ENCODE measurements at regions of chr6 and their contacts with region 1.

Region 1: DNA sequence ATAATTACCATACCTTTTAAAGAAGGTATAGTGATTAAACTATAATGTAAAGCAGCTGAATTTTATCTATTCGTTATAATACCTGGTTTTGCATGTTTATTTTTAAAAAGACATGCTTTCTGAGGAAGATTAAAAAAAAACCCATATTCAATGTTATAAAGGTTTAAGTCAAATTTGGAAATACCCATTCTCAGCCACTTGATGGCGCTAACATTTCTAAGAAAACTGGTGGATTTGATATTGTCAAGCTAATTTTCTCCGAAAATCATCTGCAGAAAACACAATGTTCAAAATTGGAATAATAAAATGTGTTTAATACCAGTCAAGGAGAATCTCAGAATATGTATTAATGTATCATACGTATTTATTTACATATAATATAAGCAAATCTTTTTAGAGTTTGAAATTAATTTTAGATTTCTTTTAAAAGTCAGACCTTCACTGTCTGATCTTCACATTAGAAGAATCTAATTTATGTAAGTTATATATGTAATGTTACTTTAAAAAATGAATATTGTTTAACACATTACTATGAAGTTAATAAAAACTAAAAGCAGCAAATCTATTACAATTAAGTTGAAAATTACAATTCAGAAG is 35.0 kb downstream of the SHPRH start:
- DNase-seq: no peak
- ATAC-seq: no peak
- H3K4me3 Mint-ChIP-seq: no peak overlapping the region
- H3K27ac Mint-ChIP-seq: no peak overlapping the region
- H3K4me1 Mint-ChIP-seq: no peaks in the 10 kb centered on the region
- H3K27me3 Mint-ChIP-seq: no peaks in the 10 kb centered on the region

Region 2: GRCh38 chr6:145225500-145225899 is 703.6 kb before region 1 on chr6:
- CTCF ChIA-PET with region 1: no interaction called
- POLR2A ChIA-PET with region 1: no interaction called
- intact Hi-C with region 1: no loop called
- DNase-seq: no peak
- ATAC-seq: no peak
- H3K4me3 Mint-ChIP-seq: no peak overlapping the region
- H3K27ac Mint-ChIP-seq: no peak overlapping the region
- H3K4me1 Mint-ChIP-seq: no peaks in the 10 kb centered on the region
- H3K27me3 Mint-ChIP-seq: peaks cover 5% of the 10 kb centered on the region

Region 3: DNA sequence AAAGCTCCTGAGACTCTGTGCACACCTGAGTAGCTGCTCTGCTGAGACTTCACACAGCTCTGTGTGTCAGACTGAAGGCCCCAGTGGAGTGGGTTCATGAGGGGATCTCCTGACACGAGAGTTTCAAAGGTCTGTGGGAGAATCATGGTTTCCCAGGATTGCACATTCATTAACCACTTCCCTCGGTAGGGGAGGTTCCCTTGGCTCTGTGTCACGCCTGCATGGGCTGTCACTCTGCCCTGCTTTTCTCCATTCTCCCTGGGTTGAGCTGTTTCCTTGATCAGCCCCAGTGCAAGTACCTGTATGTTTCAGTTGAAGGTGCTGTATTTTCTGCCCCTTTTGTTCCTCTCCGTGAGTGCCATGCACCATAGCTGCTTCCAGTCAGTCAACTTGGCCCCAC is 430.7 kb before region 1 on chr6:
- CTCF ChIA-PET with region 1: no interaction called
- POLR2A ChIA-PET with region 1: no interaction called
- intact Hi-C with region 1: no loop called
- DNase-seq: no peak
- ATAC-seq: no peak
- H3K4me3 Mint-ChIP-seq: no peak overlapping the region
- H3K27ac Mint-ChIP-seq: no peak overlapping the region
- H3K4me1 Mint-ChIP-seq: no peaks in the 10 kb centered on the region
- H3K27me3 Mint-ChIP-seq: no peaks in the 10 kb centered on the region

Region 4: DNA sequence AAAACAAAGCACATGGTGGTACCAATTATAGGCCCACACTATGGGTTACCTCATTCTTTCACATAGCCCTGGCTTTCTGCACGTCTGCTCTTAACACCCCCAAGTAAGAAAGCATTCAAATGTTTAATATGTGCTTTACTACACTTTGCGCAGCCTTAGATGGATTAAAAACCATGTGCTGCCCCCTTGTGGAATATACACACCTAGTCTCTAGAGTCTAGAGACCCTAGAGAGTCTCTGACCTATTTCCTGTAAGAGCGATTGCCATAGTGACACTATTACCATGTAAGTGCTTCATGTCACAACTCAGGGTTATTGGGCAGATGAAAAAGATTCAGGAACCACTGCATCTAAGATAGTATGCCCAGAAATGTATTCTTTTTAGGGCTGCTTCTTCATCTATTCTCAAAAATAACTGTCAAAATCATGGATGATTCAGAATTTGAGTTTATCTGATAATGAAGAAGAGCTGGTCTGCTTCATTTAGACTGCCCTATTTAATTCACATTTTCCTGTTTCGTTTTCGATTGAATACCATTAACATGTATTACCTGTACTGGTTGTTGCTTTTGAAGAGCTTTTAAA is 856.0 kb after region 1 on chr6:
- CTCF ChIA-PET with region 1: no interaction called
- POLR2A ChIA-PET with region 1: no interaction called
- intact Hi-C with region 1: loop called in 1 of 2 experiments (anchors 10 kb)
- DNase-seq: peak; percentile 48
- ATAC-seq: peak; percentile 97
- H3K4me3 Mint-ChIP-seq: no peak overlapping the region
- H3K27ac Mint-ChIP-seq: no peak overlapping the region
- H3K4me1 Mint-ChIP-seq: no peaks in the 10 kb centered on the region
- H3K27me3 Mint-ChIP-seq: peaks cover 2% of the 10 kb centered on the region